CD8-positive, alpha-beta memory T cell (primary cell): ENCODE measurements at regions of chr19 and their contacts with region 1.

Region 1: DNA sequence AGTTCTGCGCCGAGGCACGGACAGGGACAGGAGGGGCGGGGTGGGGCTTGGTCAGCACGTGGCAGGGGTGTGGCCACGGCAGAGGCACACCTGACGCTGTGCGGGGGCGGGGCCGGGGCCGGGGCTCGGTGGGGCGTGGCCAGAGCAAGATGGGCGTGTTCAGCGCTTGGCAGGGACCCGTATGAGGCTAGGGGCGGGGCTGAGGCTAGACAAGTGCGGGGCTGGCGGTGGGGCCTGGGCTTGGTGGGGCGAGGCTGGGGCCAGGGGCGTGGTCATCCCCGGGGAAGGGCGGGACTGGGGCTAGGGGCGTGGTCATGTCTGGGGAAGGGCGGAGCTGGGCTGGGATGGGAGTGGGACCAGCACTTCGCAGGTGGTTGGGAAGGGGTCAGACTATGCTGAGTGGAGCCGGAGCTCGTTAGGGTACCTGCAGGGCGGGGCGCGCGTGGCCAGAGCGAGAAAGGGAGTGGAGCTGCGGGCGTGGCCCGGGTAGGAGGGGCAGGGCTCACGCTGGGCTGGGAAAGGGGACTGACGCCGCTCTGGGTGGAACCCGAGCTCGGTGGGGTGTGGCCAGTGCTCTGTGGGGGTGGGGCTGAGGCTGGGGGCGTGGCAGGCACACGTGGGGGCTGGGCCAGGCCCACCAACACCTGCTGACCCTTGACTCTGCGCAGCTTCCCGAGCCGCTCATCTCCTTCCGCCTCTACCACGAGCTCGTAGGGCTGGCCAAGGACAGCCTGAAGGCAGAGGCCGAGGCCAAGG is 12.8 kb downstream of the POLR2E start:
- DNase-seq: peak; percentile 84 to 91 (median 85)
- H3K4me3 ChIP-seq: no peak overlapping the region
- H3K4me3 Mint-ChIP-seq: peak overlapping the region; percentile 39 to 90 (median 57)
- H3K27ac ChIP-seq: no peak overlapping the region
- H3K27ac Mint-ChIP-seq: peak overlapping the region; percentile 43 to 93 (median 82)
- H3K4me1 ChIP-seq: peaks cover 67% of the 10 kb centered on the region
- H3K4me1 Mint-ChIP-seq: peaks cover 27 to 71% (median 31%) of the 10 kb centered on the region in 3 donors
- H3K27me3 ChIP-seq: no peaks in the 10 kb centered on the region
- H3K27me3 Mint-ChIP-seq: peaks cover 0 to 5% of the 10 kb centered on the region in 2 donors

Region 2: GRCh38 chr19:1001538-1002166 is 80.7 kb before region 1 on chr19:
- CTCF ChIA-PET with region 1: no interaction called
- POLR2A ChIA-PET with region 1: no interaction called
- DNase-seq: peak; percentile 56 to 77 (median 65)
- H3K4me3 ChIP-seq: no peak overlapping the region
- H3K4me3 Mint-ChIP-seq: peak overlapping the region in 1 of 7 donors; percentile 59
- H3K27ac ChIP-seq: no peak overlapping the region
- H3K27ac Mint-ChIP-seq: peak overlapping the region in 2 of 8 donors; percentile 29 to 74
- H3K4me1 ChIP-seq: peaks cover 21% of the 10 kb centered on the region
- H3K4me1 Mint-ChIP-seq: peaks cover 1 to 25% (median 9%) of the 10 kb centered on the region in 3 donors
- H3K27me3 ChIP-seq: peaks cover 25% of the 10 kb centered on the region
- H3K27me3 Mint-ChIP-seq: peaks cover 10 to 28% of the 10 kb centered on the region in 2 donors

Region 3: GRCh38 chr19:1026189-1027019 is 55.9 kb before region 1 on chr19 and contains the start of gene CNN2:
- CTCF ChIA-PET with region 1: interaction called, 12 read pairs
- POLR2A ChIA-PET with region 1: interaction called, 143 read pairs
- DNase-seq: peak; percentile 58 to 71 (median 68)
- H3K4me3 ChIP-seq: peak within 1 kb of the TSS; percentile 92
- H3K4me3 Mint-ChIP-seq: peak within 1 kb of the TSS; percentile 95 to 99 (median 98)
- H3K27ac ChIP-seq: peak within 1 kb of the TSS; percentile 89
- H3K27ac Mint-ChIP-seq: peak within 1 kb of the TSS; percentile 82 to 99 (median 96)
- H3K4me1 ChIP-seq: peaks cover 38% of the 10 kb centered on the region
- H3K4me1 Mint-ChIP-seq: peaks cover 26 to 45% (median 32%) of the 10 kb centered on the region in 3 donors
- H3K27me3 ChIP-seq: no peaks in the 10 kb centered on the region
- H3K27me3 Mint-ChIP-seq: peaks cover 0 to 6% of the 10 kb centered on the region in 2 donors
- total RNA-seq, gene CNN2: 78.1 to 78.9 TPM

Region 4: GRCh38 chr19:1057176-1057855 is 25.0 kb before region 1 on chr19:
- CTCF ChIA-PET with region 1: interaction called, 57 read pairs
- POLR2A ChIA-PET with region 1: interaction called, 26 read pairs
- DNase-seq: peak in 3 of 5 donors; percentile 38 to 70 (median 56)
- H3K4me3 ChIP-seq: no peak overlapping the region
- H3K4me3 Mint-ChIP-seq: peak overlapping the region in 2 of 7 donors; percentile 29 to 42
- H3K27ac ChIP-seq: no peak overlapping the region
- H3K27ac Mint-ChIP-seq: peak overlapping the region; percentile 37 to 94 (median 82)
- H3K4me1 ChIP-seq: peaks cover 20% of the 10 kb centered on the region
- H3K4me1 Mint-ChIP-seq: peaks cover 24 to 29% (median 25%) of the 10 kb centered on the region in 3 donors
- H3K27me3 ChIP-seq: no peaks in the 10 kb centered on the region
- H3K27me3 Mint-ChIP-seq: no peaks in the 10 kb centered on the region